ENCODE measurements at regions of chr21 and their contacts with region 1.

Region 1: DNA sequence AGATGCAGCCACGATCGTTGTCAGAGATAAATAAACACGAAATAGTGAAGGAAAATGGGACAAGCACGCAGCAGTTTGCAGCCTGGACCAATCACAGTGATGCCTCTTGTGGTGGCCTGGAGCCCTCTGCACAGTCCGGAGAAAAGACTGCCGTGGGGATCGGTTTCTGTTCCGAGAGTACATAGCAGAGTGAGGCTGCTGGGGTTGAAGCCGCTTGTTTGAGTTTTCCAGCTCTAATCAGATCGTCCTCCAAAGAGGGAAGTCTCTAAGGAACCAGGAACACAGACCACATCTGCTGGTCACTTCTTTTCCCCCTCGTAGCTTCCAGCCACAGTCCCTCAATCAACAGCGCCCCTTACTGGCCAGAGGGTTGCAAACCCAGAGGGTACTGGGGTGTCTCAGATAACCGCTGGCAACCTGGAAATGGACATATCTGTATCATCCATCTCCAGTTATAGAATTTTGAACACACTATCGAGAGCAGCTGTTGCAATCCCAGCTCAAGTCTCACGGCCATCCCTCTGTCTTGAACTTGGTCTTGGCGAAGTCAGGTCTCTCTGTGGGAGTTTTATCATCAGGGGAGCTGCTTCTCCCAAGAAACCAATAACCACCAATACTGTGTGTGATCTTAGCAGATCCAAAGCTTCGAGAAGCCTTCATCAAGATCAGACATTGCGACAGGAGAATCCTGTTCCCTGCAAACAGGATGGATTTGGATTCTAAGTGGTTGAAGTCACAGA is 57.4 kb downstream of the OLIG1 start:
- ATAC-seq: peak; percentile 93 to 99 (median 96)
- H3K4me3 ChIP-seq: peak overlapping the region; percentile 14 to 33 (median 22)
- H3K27ac ChIP-seq: peak overlapping the region in 1 of 2 donors; percentile 7
- H3K4me1 ChIP-seq: peaks cover 33 to 39% of the 10 kb centered on the region in 2 donors

Region 2: DNA sequence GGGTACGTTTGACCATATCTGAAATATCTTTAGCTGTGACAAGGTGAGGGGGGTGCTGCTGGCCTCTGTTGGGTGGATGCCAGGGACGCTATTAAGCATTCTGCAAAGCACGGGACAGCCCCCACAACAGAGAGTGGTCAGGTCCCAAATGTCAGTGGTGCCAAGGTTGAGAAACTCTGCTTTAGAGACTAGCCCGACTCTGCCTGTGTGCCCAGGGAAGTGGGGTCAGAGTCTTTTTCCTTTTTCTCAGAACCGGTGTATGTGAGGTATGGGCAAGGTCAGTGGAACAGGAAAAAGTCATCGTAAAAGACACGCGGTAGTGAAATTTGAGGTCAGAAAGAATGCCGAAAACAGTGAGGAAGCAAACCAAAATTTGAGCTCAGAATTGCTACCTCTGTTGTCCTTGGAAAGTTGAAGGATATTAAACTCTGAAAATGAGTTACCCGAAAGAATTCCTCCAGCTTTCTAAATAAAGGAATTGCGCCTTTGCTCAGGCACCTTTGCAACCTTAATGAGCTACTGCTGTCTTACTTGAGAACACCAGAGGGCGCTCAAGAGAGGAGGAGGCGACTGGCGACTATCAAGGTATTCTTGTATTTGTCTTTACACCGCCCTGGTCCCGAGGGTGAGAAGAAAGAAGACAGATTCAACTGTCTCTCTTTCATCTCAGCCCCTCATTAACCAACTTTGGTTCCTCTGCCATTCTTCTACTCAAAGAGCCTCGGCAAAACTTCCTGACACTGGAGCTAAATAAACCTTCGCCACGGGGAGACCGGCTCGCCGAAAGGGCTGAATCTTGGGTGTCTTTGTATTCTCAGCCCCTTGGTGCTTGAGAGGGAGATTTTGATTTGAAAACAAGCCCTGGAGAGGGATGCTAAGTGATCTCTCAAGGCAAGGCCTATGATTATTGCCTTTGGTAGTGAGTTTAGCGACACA is 187.0 kb before region 1 on chr21:
- in situ Hi-C with region 1: loop called in 1 of 9 experiments (anchors 25 kb)
- ATAC-seq: peak in 3 of 8 experiments; percentile 38 to 75 (median 50)
- H3K4me3 ChIP-seq: no peak overlapping the region
- H3K27ac ChIP-seq: no peak overlapping the region
- H3K4me1 ChIP-seq: peaks cover 0 to 4% of the 10 kb centered on the region in 2 donors